ENCODE measurements at regions of chr2 and their contacts with region 1.

Region 1: DNA sequence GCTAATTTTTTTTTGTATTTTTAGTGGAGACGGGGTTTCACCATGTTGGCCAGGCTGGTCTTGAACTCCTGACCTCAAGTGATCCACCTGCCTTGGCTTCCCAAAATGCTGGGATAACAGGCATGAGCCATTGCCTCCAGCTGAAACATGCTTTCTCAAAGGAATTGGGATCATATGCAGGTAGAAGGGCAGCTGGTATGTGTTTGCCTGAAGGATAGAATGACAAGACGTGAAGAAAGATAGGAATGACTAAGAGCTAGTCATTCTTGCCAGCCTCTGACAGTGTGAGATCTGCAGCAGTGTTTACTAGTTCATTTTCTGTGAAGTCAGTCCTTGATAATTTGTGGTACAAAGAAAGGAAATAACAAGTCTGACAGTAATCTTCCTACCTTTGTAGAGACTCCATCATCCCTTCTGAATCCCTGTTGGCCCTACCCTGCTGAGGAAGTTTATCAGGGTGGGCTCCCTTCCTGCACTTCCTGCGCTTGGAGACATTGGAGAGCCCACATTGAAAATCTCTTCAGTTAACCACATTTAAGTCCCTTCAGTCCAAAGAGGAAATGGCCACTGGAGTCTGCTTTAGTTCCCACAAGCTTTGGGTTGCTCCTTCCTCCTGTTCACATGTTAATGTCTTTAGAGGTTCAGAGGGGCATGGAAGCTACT is 14.7 kb downstream of the CFLAR start:
- DNase-seq: peak; percentile 80
- H3K4me3 Mint-ChIP-seq: peak overlapping the region; percentile 81
- H3K27ac Mint-ChIP-seq: peak overlapping the region; percentile 100
- H3K4me1 Mint-ChIP-seq: peaks cover 51% of the 10 kb centered on the region
- H3K27me3 Mint-ChIP-seq: no peaks in the 10 kb centered on the region

Region 2: GRCh38 chr2:200013906-200014305 is 1116.7 kb before region 1 on chr2:
- intact Hi-C with region 1: no loop called
- DNase-seq: no peak
- H3K4me3 Mint-ChIP-seq: no peak overlapping the region
- H3K27ac Mint-ChIP-seq: no peak overlapping the region
- H3K4me1 Mint-ChIP-seq: no peaks in the 10 kb centered on the region
- H3K27me3 Mint-ChIP-seq: peaks cover 25% of the 10 kb centered on the region

Region 3: GRCh38 chr2:200864176-200864976 is 266.3 kb before region 1 on chr2 and contains the start of gene CLK1:
- intact Hi-C with region 1: loop called (anchors 1 kb)
- DNase-seq: peak; percentile 99
- H3K4me3 Mint-ChIP-seq: peak within 1 kb of the TSS; percentile 91
- H3K27ac Mint-ChIP-seq: peak within 1 kb of the TSS; percentile 94
- H3K4me1 Mint-ChIP-seq: peaks cover 32% of the 10 kb centered on the region
- H3K27me3 Mint-ChIP-seq: no peaks in the 10 kb centered on the region
- total RNA-seq, gene CLK1: 99.3 and 100 TPM in 2 replicates

Region 4: GRCh38 chr2:201158111-201158929 is 27.7 kb after region 1 on chr2:
- intact Hi-C with region 1: no loop called
- DNase-seq: peak; percentile 89
- H3K4me3 Mint-ChIP-seq: peak overlapping the region; percentile 42
- H3K27ac Mint-ChIP-seq: peak overlapping the region; percentile 77
- H3K4me1 Mint-ChIP-seq: peaks cover 18% of the 10 kb centered on the region
- H3K27me3 Mint-ChIP-seq: no peaks in the 10 kb centered on the region